ENCODE measurements at regions of chr9 and their contacts with region 1.

Region 1: GRCh38 chr9:97398999-97399758 is 12.7 kb upstream of the TDRD7 start:
- H3K4me3 Mint-ChIP-seq: no peak overlapping the region
- H3K27ac Mint-ChIP-seq: no peak overlapping the region
- H3K4me1 Mint-ChIP-seq: no peaks in the 10 kb centered on the region
- H3K27me3 Mint-ChIP-seq: peaks cover 6% of the 10 kb centered on the region

Region 2: GRCh38 chr9:97237951-97238851 is 161.0 kb before region 1 on chr9:
- intact Hi-C with region 1: no loop called
- H3K4me3 Mint-ChIP-seq: peak overlapping the region; percentile 83
- H3K27ac Mint-ChIP-seq: peak overlapping the region; percentile 77
- H3K4me1 Mint-ChIP-seq: peaks cover 21% of the 10 kb centered on the region
- H3K27me3 Mint-ChIP-seq: peaks cover 10% of the 10 kb centered on the region

Region 3: DNA sequence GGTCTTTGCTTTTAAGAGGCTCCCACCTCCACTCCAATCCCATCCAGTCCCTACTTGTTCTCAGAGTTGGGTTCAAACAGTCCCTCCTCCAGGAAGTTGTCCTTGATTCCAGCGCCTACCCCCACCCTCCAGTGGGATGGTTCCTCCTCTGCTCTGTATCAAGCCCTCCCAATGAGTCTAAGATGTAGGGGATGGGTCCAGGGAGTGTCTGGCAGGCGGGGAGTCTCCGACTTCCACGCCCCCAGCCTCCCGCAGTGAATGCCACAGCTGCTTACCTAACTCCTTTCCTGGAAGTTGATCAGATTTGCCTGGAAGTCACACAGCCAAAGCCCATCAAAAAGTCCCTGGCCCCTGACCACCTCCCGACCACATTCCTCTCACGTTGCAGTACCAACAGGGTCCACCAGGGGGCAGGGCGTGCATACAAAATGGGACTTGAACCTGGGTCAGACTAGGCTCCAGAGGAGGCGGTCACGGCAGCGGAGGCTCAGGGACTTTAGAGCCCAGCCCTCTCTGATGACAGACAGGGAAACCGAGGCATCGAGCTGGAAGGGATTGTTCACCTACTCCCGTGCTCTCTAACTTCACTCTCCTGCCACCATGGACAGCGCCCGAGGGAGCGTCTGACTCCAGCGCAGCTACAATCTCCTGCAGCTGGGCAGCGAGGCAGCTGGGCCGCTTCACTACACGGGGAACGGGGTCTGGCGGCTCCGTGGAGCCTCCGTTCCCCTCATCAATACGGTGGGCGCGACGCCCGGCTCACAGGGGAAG is 12.3 kb before region 1 on chr9:
- intact Hi-C with region 1: loop called (anchors 1 kb)
- H3K4me3 Mint-ChIP-seq: no peak overlapping the region
- H3K27ac Mint-ChIP-seq: no peak overlapping the region
- H3K4me1 Mint-ChIP-seq: peaks cover 28% of the 10 kb centered on the region
- H3K27me3 Mint-ChIP-seq: peaks cover 26% of the 10 kb centered on the region

Measured in dendritic cell treated with granulocyte-macrophage colony-stimulating factor and Interleukin-4, amounts not matched to agents 40 ng/mL and 50 ng/mL, for 4 days (primary cell).